Activated T-helper 2 cell treated with anti-CD3 and anti-CD28 coated beads, Interferon-gamma antibody, Interleukin-2, Interleukin-4, amounts not matched to agents 10 μg/mL and 5 μg/mL and 100 μg/mL, durations not matched to agents 14 hours and 24 hours and 36 hours (primary cell): ENCODE measurements at regions of chr12 and their contacts with region 1.

Region 1: DNA sequence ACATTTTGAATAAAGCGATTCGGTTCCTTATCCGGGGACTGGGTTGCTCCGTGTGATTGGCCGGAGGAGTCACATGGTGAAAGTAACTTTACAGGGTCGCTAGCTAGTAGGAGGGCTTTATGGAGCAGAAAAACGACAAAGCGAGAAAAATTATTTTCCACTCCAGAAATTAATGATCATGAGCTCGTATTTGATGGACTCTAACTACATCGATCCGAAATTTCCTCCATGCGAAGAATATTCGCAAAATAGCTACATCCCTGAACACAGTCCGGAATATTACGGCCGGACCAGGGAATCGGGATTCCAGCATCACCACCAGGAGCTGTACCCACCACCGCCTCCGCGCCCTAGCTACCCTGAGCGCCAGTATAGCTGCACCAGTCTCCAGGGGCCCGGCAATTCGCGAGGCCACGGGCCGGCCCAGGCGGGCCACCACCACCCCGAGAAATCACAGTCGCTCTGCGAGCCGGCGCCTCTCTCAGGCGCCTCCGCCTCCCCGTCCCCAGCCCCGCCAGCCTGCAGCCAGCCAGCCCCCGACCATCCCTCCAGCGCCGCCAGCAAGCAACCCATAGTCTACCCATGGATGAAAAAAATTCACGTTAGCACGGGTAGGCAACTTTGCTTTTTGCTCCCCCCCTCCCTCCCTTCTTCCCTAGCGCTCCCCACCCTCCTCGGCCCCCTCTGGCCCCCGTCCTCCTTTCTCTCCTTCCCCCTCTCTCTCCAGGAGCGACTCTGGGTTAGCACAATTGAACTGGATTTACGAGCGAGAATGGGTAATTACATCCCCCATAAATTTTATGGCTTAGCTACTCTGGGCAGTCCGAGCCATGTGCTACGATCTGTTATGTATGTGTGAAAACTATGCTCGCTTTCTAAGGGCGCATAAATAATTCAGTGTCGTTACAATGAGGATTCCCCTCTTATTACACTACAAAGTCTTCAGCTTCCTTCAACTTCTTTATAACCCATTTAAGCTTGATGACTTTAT is at the start of gene HOXC4:
- DNase-seq: no peak
- H3K4me3 Mint-ChIP-seq: peak within 1 kb of the TSS; percentile 31
- H3K27ac Mint-ChIP-seq: peak within 1 kb of the TSS; percentile 25
- H3K4me1 Mint-ChIP-seq: peaks cover 18% of the 10 kb centered on the region
- H3K27me3 Mint-ChIP-seq: peaks cover 87% of the 10 kb centered on the region
- total RNA-seq, gene HOXC4: 0.14 and 0.21 TPM in 2 replicates

Region 2: GRCh38 chr12:52976147-52977071 is 1077.6 kb before region 1 on chr12:
- intact Hi-C with region 1: no loop called
- DNase-seq: no peak
- H3K4me3 Mint-ChIP-seq: no peak overlapping the region
- H3K27ac Mint-ChIP-seq: no peak overlapping the region
- H3K4me1 Mint-ChIP-seq: no peaks in the 10 kb centered on the region
- H3K27me3 Mint-ChIP-seq: peaks cover 29% of the 10 kb centered on the region

Region 3: DNA sequence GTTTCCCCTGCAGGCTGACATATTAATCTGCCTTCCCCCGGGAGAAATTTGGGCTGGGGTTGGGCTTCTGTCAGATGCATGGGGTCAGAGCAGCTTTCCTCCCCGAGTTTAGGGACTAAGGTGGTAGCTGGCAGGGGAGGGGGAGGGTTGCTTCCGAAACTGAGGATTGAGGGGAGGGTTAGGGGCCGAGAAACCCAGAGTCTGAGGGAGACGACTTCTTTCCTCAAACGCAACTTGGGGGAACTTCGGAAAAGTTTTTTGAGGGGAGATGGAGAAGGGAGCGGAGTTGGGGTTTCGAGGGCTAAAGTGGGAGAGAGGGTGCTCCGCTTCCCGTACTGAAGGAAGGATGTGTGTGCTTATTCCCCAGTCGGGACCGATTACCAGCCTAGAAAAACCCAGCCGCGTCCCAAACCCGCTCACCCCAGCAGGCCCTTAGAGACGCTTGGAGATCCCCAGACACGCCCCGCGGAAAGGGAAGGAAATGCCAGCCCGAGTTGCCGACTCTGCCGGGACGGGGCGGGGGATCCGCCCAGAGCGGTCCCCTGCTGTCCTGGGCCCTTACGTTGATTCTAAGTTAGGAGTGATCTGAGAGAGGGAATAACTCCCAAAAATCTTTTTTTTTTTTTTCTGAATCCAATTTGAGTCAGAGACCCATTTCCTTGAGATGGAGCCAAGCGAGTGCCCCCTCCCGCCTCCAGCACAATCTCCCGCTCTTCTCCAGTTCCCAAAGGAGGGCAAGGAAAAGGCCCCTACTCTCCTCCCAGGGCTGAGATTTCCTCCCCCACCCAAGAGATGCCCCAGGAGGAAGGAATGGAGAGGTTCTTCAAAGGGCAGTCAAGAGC is 72.9 kb after region 1 on chr12:
- intact Hi-C with region 1: loop called (anchors 10 kb)
- DNase-seq: no peak
- H3K4me3 Mint-ChIP-seq: no peak overlapping the region
- H3K27ac Mint-ChIP-seq: no peak overlapping the region
- H3K4me1 Mint-ChIP-seq: no peaks in the 10 kb centered on the region
- H3K27me3 Mint-ChIP-seq: peaks cover 84% of the 10 kb centered on the region

Region 4: DNA sequence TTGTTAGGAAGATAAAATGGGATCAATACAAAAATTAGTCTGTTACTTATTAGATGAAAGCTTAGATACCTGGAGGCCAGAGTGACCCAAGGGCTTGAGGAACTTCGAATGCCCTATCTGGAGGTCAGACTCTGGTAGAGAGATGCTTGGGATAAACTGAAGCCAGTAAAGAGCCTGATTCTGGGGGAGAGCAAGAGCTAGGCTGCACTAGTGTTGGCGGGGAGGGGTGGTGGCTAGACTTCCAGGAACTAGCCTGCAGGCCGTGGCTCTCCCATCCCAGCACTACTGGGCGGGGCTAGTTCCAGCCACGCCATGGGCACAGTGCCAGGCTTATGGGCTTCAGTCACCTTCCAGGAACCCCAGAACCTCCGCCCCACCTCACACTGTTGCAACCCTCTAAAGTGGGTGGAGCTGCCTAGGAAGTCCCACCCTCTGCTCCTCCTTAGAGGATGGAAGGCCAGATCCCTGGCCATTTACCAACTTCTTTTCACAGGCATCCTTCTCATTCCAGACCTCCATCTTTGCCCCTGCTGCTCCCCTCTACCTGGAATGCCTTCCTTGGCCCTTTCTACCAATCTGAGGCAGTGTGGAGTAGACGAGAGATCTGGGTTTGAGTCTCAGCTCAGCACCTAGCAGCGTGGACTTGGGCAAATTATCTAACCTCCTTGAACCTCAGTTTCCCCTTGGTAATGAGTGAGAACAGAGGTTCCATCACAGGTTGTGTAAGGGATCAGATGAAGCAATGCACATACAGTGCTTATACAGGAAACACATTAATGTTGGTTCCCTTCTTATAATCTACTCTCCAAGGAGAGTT is 253.1 kb after region 1 on chr12:
- intact Hi-C with region 1: no loop called
- DNase-seq: no peak
- H3K4me3 Mint-ChIP-seq: no peak overlapping the region
- H3K27ac Mint-ChIP-seq: no peak overlapping the region
- H3K4me1 Mint-ChIP-seq: peaks cover 17% of the 10 kb centered on the region
- H3K27me3 Mint-ChIP-seq: peaks cover 26% of the 10 kb centered on the region